ENCODE measurements at regions of chr1 and their contacts with region 1.

Region 1: GRCh38 chr1:212070720-212071302 is 35.3 kb downstream of the DTL start:
- DNase-seq: no peak
- H3K4me3 ChIP-seq: no peak overlapping the region
- H3K27ac ChIP-seq: no peak overlapping the region
- H3K4me1 ChIP-seq: no peaks in the 10 kb centered on the region
- H3K27me3 ChIP-seq: no peaks in the 10 kb centered on the region
- CTCF ChIP-seq: peak; percentile 75

Region 2: DNA sequence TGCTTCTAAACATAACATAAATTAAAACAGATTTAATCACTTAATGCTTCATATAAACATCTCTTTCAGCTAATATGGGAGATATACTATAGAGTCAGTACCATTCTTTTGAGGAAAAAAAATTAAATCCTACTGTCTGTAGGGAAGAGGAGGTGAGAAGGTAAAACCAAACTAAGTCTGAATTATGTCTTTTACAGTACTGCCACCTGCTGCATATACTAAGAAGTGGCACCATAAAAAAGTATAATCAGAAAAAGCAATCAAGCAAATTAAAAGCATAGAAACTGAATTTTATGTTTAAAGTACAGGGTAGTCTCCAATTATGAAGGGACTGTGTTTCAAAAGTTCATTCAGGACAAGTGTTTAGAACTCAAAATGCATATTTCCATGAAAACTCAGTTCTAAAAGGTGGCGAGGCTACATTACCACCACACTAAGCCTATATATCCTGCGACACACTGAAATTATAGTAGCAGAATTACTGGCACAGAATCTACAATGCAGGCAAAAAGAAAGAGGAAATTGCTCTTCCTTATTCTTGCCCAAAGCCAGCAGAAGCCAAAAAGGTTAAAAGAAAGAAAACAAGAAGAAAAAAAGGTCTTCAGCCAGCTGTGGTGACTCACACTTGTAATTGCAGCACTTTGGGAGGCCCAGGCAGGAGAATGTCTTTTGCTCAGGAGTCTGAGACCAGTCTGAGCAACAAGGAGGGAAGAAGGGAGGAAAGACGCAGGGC is 711.8 kb after region 1 on chr1:
- CTCF ChIA-PET with region 1: no interaction called
- POLR2A ChIA-PET with region 1: no interaction called
- intact Hi-C with region 1: loop called (anchors 5 kb)
- DNase-seq: peak in 1 of 2 experiments; percentile 38
- H3K4me3 ChIP-seq: no peak overlapping the region
- H3K27ac ChIP-seq: no peak overlapping the region
- H3K4me1 ChIP-seq: no peaks in the 10 kb centered on the region
- H3K27me3 ChIP-seq: no peaks in the 10 kb centered on the region
- CTCF ChIP-seq: peak; percentile 81